ENCODE measurements at regions of chr9 and their contacts with region 1.

Region 1: GRCh38 chr9:114397848-114398605 is 10.2 kb upstream of the AKNA start:
- DNase-seq: peak; percentile 74 to 97 (median 95)
- H3K4me3 ChIP-seq: peak overlapping the region; percentile 62 to 98 (median 87)
- H3K27ac ChIP-seq: peak overlapping the region in 57 of 59 donors; percentile 4 to 89 (median 74)
- H3K27me3 ChIP-seq: no peaks in the 10 kb centered on the region
- CTCF ChIP-seq: peak in 31 of 56 donors; percentile 6 to 60 (median 30)

Region 2: GRCh38 chr9:114339130-114339908 is 58.7 kb before region 1 on chr9:
- intact Hi-C with region 1: loop called (anchors 5 to 10 kb)
- DNase-seq: peak in 4 of 10 donors; percentile 39 to 72 (median 55)
- H3K4me3 ChIP-seq: no peak overlapping the region
- H3K27ac ChIP-seq: no peak overlapping the region
- H3K27me3 ChIP-seq: no peaks in the 10 kb centered on the region
- CTCF ChIP-seq: peak; percentile 30 to 85 (median 73)

Region 3: GRCh38 chr9:114348906-114349482 is 49.0 kb before region 1 on chr9:
- intact Hi-C with region 1: loop called (anchors 5 to 10 kb)
- DNase-seq: peak in 7 of 10 donors; percentile 39 to 81 (median 68)
- H3K4me3 ChIP-seq: no peak overlapping the region
- H3K27ac ChIP-seq: peak overlapping the region in 48 of 59 donors; percentile 24 to 92 (median 78)
- H3K27me3 ChIP-seq: no peaks in the 10 kb centered on the region
- CTCF ChIP-seq: no peak